ENCODE measurements at regions of chr10 and their contacts with region 1.

Region 1: DNA sequence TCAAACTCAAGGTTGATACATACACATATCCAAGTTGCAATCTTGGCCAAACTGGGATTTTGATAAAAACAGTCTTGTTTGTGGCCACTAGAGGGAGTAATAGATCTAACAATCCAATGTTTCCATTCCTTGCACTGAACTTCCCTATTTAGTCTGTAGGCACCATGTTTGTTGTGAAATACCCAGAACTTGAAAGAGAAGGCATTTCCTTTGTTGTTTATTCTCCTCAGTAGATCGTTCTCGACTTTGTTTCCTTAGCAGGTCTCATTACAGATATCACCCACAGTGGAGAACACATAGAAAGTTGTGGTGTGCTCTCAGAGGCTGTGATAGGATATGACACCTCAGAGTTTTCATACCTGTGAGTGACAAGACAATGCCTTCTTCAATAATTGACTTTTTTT is 70.3 kb upstream of the MXI1 start:
- DNase-seq: no peak
- ATAC-seq: peak; percentile 82
- H3K4me3 Mint-ChIP-seq: no peak overlapping the region
- H3K27ac Mint-ChIP-seq: no peak overlapping the region
- H3K4me1 Mint-ChIP-seq: peaks cover 31% of the 10 kb centered on the region
- H3K27me3 Mint-ChIP-seq: no peaks in the 10 kb centered on the region

Region 2: GRCh38 chr10:109883859-109884771 is 253.0 kb before region 1 on chr10:
- CTCF ChIA-PET with region 1: interaction called, 13 read pairs
- POLR2A ChIA-PET with region 1: no interaction called
- DNase-seq: peak; percentile 67
- ATAC-seq: peak; percentile 78
- H3K4me3 Mint-ChIP-seq: no peak overlapping the region
- H3K27ac Mint-ChIP-seq: peak overlapping the region; percentile 64
- H3K4me1 Mint-ChIP-seq: peaks cover 23% of the 10 kb centered on the region
- H3K27me3 Mint-ChIP-seq: no peaks in the 10 kb centered on the region

Region 3: GRCh38 chr10:110147961-110148360 is 10.8 kb after region 1 on chr10:
- CTCF ChIA-PET with region 1: interaction called, 15 read pairs
- POLR2A ChIA-PET with region 1: no interaction called
- DNase-seq: no peak
- ATAC-seq: no peak
- H3K4me3 Mint-ChIP-seq: no peak overlapping the region
- H3K27ac Mint-ChIP-seq: no peak overlapping the region
- H3K4me1 Mint-ChIP-seq: peaks cover 6% of the 10 kb centered on the region
- H3K27me3 Mint-ChIP-seq: peaks cover 74% of the 10 kb centered on the region

Region 4: DNA sequence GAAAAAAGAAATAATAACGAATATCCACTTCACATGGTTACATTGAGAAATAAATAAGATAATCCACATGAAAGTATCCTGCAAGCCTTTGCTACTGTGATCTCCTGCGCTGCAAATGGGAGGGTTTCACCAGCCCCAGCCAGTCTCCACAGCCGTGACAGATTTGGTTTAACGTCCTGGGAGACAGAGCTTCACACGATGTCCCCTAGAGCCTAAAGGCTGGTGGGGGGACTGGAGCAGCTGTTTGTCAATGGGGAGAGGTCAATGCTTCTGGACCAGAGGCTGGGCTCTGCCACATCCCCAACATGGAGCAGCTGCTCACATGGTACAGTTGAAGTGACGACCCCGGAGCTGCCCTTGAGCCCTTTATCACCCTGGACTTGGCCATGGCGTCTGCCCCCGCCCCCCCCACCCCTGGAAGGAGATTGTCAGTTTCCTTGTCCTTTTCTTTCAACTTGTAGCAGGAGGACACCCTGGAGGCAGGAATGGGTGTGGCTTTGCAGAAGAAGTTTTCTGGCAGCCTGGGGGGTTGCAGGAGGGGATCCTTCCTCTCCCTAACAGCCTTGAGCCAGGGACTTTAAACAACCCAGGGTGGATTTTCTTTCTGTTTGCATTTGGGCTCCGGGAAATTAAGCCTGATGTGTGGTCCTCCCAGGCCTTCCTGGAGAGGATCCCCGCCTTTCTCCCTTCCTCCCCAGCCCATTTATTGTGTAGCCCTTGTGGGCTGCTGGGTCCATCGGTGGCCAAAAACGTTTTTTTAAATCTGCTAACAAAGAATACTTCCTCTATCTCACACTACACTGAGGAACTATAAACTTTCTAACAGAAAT is 33.2 kb after region 1 on chr10:
- CTCF ChIA-PET with region 1: no interaction called
- POLR2A ChIA-PET with region 1: no interaction called
- DNase-seq: no peak
- ATAC-seq: no peak
- H3K4me3 Mint-ChIP-seq: no peak overlapping the region
- H3K27ac Mint-ChIP-seq: no peak overlapping the region
- H3K4me1 Mint-ChIP-seq: peaks cover 16% of the 10 kb centered on the region
- H3K27me3 Mint-ChIP-seq: peaks cover 65% of the 10 kb centered on the region

Region 5: GRCh38 chr10:110210674-110211464 is 73.7 kb after region 1 on chr10:
- CTCF ChIA-PET with region 1: interaction called, 73 read pairs
- POLR2A ChIA-PET with region 1: interaction called, 3 read pairs
- DNase-seq: peak; percentile 94
- ATAC-seq: peak; percentile 68
- H3K4me3 Mint-ChIP-seq: peak overlapping the region; percentile 90
- H3K27ac Mint-ChIP-seq: peak overlapping the region; percentile 84
- H3K4me1 Mint-ChIP-seq: peaks cover 56% of the 10 kb centered on the region
- H3K27me3 Mint-ChIP-seq: peaks cover 15% of the 10 kb centered on the region

Region 6: GRCh38 chr10:110225756-110226542 is 88.8 kb after region 1 on chr10:
- CTCF ChIA-PET with region 1: interaction called, 38 read pairs
- POLR2A ChIA-PET with region 1: no interaction called
- DNase-seq: peak; percentile 90
- ATAC-seq: peak; percentile 72
- H3K4me3 Mint-ChIP-seq: peak overlapping the region; percentile 92
- H3K27ac Mint-ChIP-seq: peak overlapping the region; percentile 92
- H3K4me1 Mint-ChIP-seq: peaks cover 40% of the 10 kb centered on the region
- H3K27me3 Mint-ChIP-seq: peaks cover 7% of the 10 kb centered on the region

Region 7: DNA sequence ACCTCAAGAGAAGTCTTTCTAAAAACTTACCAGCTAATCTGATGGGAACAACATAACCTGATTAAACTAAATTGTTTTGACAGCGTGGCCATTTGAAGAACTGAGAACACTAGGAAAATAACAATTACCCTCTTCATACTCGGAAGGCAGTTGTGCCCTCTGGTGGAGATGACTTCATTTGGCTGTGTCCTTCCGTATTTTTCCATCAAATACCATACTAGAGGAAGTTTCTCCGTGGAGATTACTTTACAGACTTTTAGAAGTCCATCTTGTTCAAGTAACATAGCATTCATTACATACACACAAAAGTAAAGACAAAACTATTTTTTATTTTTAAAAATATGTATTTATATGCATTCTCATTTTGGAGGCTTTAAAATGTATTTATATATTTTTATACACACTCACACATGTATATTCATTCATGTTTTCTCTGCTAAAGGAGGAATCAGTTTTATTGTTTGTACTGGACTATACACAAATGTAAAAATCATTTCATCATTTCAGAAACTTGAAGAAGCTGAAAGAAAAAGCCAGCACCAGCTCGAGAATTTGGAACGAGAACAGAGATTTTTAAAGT is 142.4 kb after region 1 on chr10:
- CTCF ChIA-PET with region 1: interaction called, 81 read pairs
- POLR2A ChIA-PET with region 1: no interaction called
- DNase-seq: peak; percentile 58
- ATAC-seq: peak; percentile 53
- H3K4me3 Mint-ChIP-seq: no peak overlapping the region
- H3K27ac Mint-ChIP-seq: no peak overlapping the region
- H3K4me1 Mint-ChIP-seq: peaks cover 17% of the 10 kb centered on the region
- H3K27me3 Mint-ChIP-seq: peaks cover 19% of the 10 kb centered on the region

Region 8: DNA sequence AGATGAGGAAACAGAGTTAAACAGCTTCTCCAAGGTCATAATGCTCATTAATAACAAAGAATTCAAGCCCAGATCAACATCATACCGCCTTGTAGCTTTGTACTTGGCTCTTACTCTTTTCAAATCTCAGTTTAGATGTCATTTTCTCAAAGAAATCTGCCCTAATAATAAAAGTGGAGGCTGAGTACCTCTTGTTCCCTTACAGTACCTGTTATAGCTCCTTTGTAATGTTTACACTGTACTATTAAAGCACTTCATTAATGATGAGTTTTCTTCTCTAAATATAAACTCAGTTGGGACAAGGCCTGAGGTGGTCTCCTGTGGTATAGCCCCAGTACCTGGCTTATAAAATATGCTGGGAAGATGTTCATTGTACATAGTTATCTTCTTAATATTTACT is 159.8 kb after region 1 on chr10:
- CTCF ChIA-PET with region 1: interaction called, 10 read pairs
- POLR2A ChIA-PET with region 1: no interaction called
- DNase-seq: no peak
- ATAC-seq: no peak
- H3K4me3 Mint-ChIP-seq: no peak overlapping the region
- H3K27ac Mint-ChIP-seq: no peak overlapping the region
- H3K4me1 Mint-ChIP-seq: peaks cover 25% of the 10 kb centered on the region
- H3K27me3 Mint-ChIP-seq: no peaks in the 10 kb centered on the region